Heart right ventricle (tissue), 16 donors: ENCODE measurements at regions of chrX and their contacts with region 1.

Region 1: DNA sequence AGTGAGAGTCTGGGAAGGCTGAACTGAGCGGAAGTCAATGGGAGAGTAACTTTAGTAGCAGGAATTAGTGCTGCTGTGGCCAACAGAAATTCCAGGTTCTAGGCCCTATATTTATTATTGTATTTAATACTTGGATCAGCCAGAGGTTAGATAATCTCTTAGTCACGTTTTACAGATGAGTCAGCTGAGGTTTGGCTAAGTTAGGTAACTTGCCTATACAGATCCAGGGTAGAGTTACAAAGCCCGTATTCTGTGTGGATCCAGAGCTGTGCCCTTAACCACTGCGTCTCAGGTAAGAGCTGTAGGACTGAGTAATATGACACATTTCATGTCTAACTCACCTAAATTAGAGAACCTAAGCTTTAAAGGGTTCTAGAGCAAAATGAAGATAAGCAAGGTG is 20.5 kb downstream of the PSMD10 start:
- DNase-seq: no peak
- ATAC-seq: no peak
- H3K4me3 ChIP-seq: no peak overlapping the region
- H3K27ac ChIP-seq: no peak overlapping the region
- H3K4me1 ChIP-seq: no peaks in the 10 kb centered on the region
- H3K27me3 ChIP-seq: peaks cover 0 to 57% (median 0%) of the 10 kb centered on the region in 7 donors
- CTCF ChIP-seq: no peak

Region 2: GRCh38 chrX:108020631-108021030 is 50.3 kb before region 1 on chrX:
- intact Hi-C with region 1: loop called in 3 of 10 experiments (anchors 5 to 10 kb)
- DNase-seq: no peak
- ATAC-seq: no peak
- H3K4me3 ChIP-seq: no peak overlapping the region
- H3K27ac ChIP-seq: no peak overlapping the region
- H3K4me1 ChIP-seq: no peaks in the 10 kb centered on the region
- H3K27me3 ChIP-seq: peaks cover 0 to 36% (median 0%) of the 10 kb centered on the region in 7 donors
- CTCF ChIP-seq: peak; percentile 10 to 54 (median 47)

Region 3: GRCh38 chrX:108165383-108166111 is 94.7 kb after region 1 on chrX:
- intact Hi-C with region 1: no loop called
- DNase-seq: no peak
- ATAC-seq: no peak
- H3K4me3 ChIP-seq: no peak overlapping the region
- H3K27ac ChIP-seq: no peak overlapping the region
- H3K4me1 ChIP-seq: no peaks in the 10 kb centered on the region
- H3K27me3 ChIP-seq: peaks cover 0 to 20% (median 0%) of the 10 kb centered on the region in 7 donors
- CTCF ChIP-seq: peak in 6 of 9 donors; percentile 18 to 30 (median 22)

Region 4: GRCh38 chrX:108415891-108416290 is 345.0 kb after region 1 on chrX:
- intact Hi-C with region 1: loop called in 1 of 10 experiments (anchors 5 kb)
- DNase-seq: no peak
- ATAC-seq: no peak
- H3K4me3 ChIP-seq: no peak overlapping the region
- H3K27ac ChIP-seq: no peak overlapping the region
- H3K4me1 ChIP-seq: no peaks in the 10 kb centered on the region
- H3K27me3 ChIP-seq: peaks cover 0 to 32% (median 0%) of the 10 kb centered on the region in 7 donors
- CTCF ChIP-seq: no peak